CD4-positive, alpha-beta memory T cell (primary cell): ENCODE measurements at regions of chr17 and their contacts with region 1.

Region 1: DNA sequence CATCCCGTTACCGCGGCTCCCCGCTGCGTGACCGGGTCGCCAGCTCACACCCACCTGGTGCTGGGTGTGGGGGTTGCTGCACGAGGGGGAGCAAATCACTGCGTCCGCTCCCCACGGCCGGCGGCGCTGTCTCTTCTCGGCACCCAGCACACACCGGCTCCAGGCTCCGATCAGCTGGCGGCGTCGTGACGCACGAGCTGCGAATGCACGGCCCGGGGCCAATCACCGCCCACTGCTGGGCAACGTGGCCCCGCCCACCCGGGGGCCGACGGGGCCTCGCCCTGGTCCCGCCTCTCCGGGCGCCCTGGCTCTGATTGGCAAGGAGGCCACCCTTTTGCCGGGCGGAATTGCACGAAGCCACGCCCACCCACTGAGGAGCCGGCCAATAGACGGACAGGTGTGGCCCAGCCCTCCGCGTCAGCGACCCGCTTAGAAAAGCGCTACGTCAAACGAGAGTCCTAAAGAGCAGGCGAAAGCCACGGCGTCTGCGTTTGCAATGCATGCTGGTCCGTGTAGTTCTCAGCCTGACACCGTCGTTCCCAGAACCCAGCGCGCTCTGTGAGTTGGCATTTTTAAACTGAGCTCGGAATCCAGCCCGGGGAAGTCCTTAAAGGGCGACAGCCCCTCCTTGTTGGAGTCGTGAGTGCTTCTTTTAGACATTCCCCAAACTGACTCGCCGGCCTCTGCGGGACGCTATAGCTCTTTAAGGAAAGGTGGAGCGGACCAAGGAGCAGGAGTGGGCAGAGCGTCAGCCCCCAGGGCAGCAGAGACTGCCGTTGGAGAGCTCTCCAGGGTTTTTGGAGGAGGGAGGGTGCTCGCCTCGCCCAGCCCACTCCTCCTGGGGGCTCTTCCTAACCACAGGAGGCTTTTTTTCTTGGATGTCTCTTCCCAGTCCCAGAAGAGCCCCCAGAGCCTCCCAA is 6.2 kb upstream of the TLCD2 start:
- DNase-seq: peak; percentile 100
- H3K4me3 ChIP-seq: peak overlapping the region; percentile 76 to 100
- H3K4me3 Mint-ChIP-seq: peak overlapping the region; percentile 90 to 96 (median 94)
- H3K27ac ChIP-seq: peak overlapping the region; percentile 89
- H3K27ac Mint-ChIP-seq: peak overlapping the region; percentile 89 to 98 (median 96)
- H3K4me1 ChIP-seq: peaks cover 31% of the 10 kb centered on the region
- H3K4me1 Mint-ChIP-seq: peaks cover 14 to 55% (median 35%) of the 10 kb centered on the region in 4 donors
- H3K27me3 ChIP-seq: no peaks in the 10 kb centered on the region
- H3K27me3 Mint-ChIP-seq: no peaks in the 10 kb centered on the region

Region 2: DNA sequence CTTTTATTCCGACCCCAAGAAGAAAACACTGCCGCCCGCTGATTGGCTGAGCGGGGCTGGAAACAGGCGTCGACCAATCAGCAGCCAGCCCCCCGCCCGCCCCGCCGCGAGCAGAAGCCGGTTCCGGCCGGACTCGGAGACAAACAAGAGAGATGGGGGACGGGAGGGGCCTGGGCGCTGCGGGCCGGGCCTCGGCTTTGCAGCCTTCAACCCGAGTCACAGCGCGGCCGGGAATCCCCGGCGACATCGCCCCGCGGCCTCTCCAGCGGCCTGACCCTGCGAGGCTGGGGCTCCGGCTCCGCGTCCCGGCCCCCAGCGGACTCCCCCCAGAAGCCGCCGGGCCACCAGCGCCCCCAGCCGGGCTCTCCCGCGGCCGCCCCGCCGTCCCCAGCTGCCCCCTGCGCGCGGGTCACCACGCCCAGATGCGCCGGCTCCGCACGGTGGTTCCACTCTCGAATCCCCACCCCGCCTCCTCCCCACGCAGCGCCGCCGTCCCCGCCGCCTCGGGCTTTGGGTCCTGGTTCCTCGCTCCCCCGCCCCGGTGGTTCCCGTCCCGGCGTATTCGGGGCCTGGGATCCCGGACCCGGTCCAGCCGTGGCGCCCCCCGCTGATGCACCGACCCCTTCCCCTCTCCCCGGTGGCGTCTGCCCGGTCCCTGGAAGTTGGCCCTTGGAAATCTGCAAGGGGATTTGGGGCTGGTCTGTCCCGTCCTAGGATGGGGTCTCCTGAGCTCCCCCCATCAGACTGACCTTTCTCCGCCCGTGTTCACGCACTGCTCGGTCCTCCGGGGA is 87.3 kb before region 1 on chr17:
- CTCF ChIA-PET with region 1: interaction called, 3 read pairs
- POLR2A ChIA-PET with region 1: interaction called, 3 read pairs
- intact Hi-C with region 1: loop called (anchors 1 kb)
- DNase-seq: peak; percentile 83 to 90 (median 85)
- H3K4me3 ChIP-seq: peak overlapping the region; percentile 57 to 73
- H3K4me3 Mint-ChIP-seq: peak overlapping the region; percentile 87 to 99 (median 92)
- H3K27ac ChIP-seq: peak overlapping the region; percentile 44
- H3K27ac Mint-ChIP-seq: peak overlapping the region; percentile 75 to 96 (median 86)
- H3K4me1 ChIP-seq: peaks cover 22% of the 10 kb centered on the region
- H3K4me1 Mint-ChIP-seq: peaks cover 3 to 27% (median 12%) of the 10 kb centered on the region in 4 donors
- H3K27me3 ChIP-seq: peaks cover 8% of the 10 kb centered on the region
- H3K27me3 Mint-ChIP-seq: peaks cover 1% of the 10 kb centered on the region in 2 donors

Region 3: GRCh38 chr17:1673041-1673785 is 43.1 kb before region 1 on chr17:
- CTCF ChIA-PET with region 1: interaction called, 18 read pairs
- POLR2A ChIA-PET with region 1: interaction called, 17 read pairs
- intact Hi-C with region 1: loop called (anchors 5 kb)
- DNase-seq: peak; percentile 21 to 71 (median 42)
- H3K4me3 ChIP-seq: no peak overlapping the region
- H3K4me3 Mint-ChIP-seq: peak overlapping the region in 2 of 8 donors; percentile 13 to 21
- H3K27ac ChIP-seq: peak overlapping the region; percentile 4
- H3K27ac Mint-ChIP-seq: peak overlapping the region in 6 of 7 donors; percentile 37 to 74 (median 62)
- H3K4me1 ChIP-seq: no peaks in the 10 kb centered on the region
- H3K4me1 Mint-ChIP-seq: peaks cover 18 to 37% (median 29%) of the 10 kb centered on the region in 4 donors
- H3K27me3 ChIP-seq: no peaks in the 10 kb centered on the region
- H3K27me3 Mint-ChIP-seq: no peaks in the 10 kb centered on the region

Region 4: GRCh38 chr17:1764284-1764683 is 47.9 kb after region 1 on chr17:
- CTCF ChIA-PET with region 1: interaction called, 21 read pairs
- POLR2A ChIA-PET with region 1: interaction called, 62 read pairs
- intact Hi-C with region 1: loop called (anchors 5 kb)
- DNase-seq: peak; percentile 43 to 83 (median 76)
- H3K4me3 ChIP-seq: no peak overlapping the region
- H3K4me3 Mint-ChIP-seq: peak overlapping the region; percentile 40 to 86 (median 66)
- H3K27ac ChIP-seq: peak overlapping the region; percentile 43
- H3K27ac Mint-ChIP-seq: peak overlapping the region; percentile 51 to 97 (median 92)
- H3K4me1 ChIP-seq: peaks cover 34% of the 10 kb centered on the region
- H3K4me1 Mint-ChIP-seq: peaks cover 17 to 49% (median 22%) of the 10 kb centered on the region in 4 donors
- H3K27me3 ChIP-seq: no peaks in the 10 kb centered on the region
- H3K27me3 Mint-ChIP-seq: no peaks in the 10 kb centered on the region

Region 5: DNA sequence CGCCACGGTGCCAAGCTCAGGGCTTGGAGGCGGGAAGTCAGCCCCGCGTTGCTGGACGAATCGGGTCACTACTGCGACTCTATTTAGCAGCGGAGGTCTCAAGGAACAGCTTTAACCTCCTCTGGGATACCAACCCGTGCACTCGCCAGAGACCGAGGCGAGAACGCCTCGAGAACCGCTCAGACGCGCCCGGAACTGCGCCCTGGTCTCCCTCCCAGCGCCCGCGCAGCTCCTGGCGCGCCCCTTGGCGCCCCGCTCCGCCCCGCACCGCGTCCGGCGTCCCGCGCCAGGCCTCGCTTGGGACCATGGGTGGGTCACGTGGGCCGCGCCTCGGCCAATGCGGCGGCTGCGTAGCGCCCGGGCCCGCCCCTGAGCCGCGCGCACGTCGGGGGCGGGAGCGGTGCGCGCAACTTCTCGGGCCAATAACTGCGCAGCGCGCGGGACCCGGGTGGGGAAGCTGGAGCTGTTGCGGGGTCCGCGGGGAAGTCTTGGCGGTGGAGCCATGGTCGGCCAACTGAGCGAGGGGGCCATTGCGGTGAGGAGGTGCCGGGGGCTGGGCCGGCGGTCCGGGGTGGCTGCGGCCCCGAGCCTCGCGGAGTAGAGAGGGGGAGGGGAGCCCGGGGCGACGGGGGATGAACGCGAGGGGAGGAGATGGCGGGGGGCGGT is 113.4 kb after region 1 on chr17 and contains the starts of genes RPA1 and SMYD4:
- CTCF ChIA-PET with region 1: interaction called, 6 read pairs
- POLR2A ChIA-PET with region 1: interaction called, 29 read pairs
- intact Hi-C with region 1: loop called (anchors 2 kb)
- DNase-seq: peak; percentile 87 to 91 (median 88)
- H3K4me3 ChIP-seq: peak within 1 kb of the TSS; percentile 58 to 73
- H3K4me3 Mint-ChIP-seq: peak within 1 kb of the TSS; percentile 92 to 99 (median 97)
- H3K27ac ChIP-seq: peak within 1 kb of the TSS; percentile 67
- H3K27ac Mint-ChIP-seq: peak within 1 kb of the TSS; percentile 89 to 99 (median 97)
- H3K4me1 ChIP-seq: peaks cover 59% of the 10 kb centered on the region
- H3K4me1 Mint-ChIP-seq: peaks cover 33 to 70% (median 52%) of the 10 kb centered on the region in 4 donors
- H3K27me3 ChIP-seq: no peaks in the 10 kb centered on the region
- H3K27me3 Mint-ChIP-seq: no peaks in the 10 kb centered on the region
- total RNA-seq, gene RPA1: 103 to 119 TPM
- total RNA-seq, gene SMYD4: 31.2 to 31.5 TPM

Region 6: DNA sequence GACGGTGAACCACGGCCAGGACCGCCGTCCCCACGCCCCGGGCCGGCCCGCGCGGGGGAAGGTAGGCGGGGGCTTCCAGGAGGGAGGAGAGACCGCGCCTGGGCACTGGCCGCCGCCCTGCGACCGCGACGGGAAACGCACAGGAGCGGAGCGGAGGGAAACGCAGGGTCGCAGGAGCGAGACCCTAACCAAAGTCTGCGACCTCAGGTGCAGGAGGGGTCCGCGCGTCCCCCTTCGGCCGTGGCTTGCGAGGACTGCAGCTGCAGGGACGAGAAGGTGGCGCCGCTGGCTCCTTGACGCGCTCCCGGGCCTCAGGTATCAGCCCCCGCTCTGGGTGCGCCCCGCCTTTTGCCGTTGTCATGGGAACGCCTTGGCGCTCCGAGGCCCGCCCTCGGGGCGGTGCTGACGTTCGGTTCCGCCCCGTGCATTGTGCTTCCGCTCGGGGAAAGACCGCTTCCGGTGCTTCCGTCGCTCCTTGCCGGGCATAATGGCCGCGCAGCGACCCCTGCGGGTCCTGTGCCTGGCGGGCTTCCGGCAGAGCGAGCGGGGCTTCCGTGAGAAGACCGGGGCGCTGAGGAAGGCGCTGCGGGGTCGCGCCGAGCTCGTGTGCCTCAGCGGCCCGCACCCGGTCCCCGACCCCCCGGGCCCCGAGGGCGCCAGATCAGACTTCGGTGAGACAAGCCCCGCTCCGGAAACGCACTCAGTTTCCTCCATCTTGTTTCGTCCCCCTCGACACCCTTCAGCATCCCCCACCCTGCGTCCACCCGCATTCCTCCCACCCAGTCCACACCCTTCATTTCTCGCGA is 325.4 kb after region 1 on chr17 and contains the start of gene OVCA2:
- CTCF ChIA-PET with region 1: interaction called, 3 read pairs
- POLR2A ChIA-PET with region 1: interaction called, 13 read pairs
- intact Hi-C with region 1: no loop called
- DNase-seq: peak; percentile 96 to 98 (median 97)
- H3K4me3 ChIP-seq: peak within 1 kb of the TSS; percentile 64 to 79
- H3K4me3 Mint-ChIP-seq: peak within 1 kb of the TSS; percentile 90 to 94 (median 92)
- H3K27ac ChIP-seq: peak within 1 kb of the TSS; percentile 85
- H3K27ac Mint-ChIP-seq: peak within 1 kb of the TSS; percentile 89 to 98 (median 96)
- H3K4me1 ChIP-seq: peaks cover 24% of the 10 kb centered on the region
- H3K4me1 Mint-ChIP-seq: peaks cover 6 to 32% (median 14%) of the 10 kb centered on the region in 4 donors
- H3K27me3 ChIP-seq: no peaks in the 10 kb centered on the region
- H3K27me3 Mint-ChIP-seq: no peaks in the 10 kb centered on the region
- total RNA-seq, gene OVCA2: 27.9 to 36.7 TPM

Region 7: DNA sequence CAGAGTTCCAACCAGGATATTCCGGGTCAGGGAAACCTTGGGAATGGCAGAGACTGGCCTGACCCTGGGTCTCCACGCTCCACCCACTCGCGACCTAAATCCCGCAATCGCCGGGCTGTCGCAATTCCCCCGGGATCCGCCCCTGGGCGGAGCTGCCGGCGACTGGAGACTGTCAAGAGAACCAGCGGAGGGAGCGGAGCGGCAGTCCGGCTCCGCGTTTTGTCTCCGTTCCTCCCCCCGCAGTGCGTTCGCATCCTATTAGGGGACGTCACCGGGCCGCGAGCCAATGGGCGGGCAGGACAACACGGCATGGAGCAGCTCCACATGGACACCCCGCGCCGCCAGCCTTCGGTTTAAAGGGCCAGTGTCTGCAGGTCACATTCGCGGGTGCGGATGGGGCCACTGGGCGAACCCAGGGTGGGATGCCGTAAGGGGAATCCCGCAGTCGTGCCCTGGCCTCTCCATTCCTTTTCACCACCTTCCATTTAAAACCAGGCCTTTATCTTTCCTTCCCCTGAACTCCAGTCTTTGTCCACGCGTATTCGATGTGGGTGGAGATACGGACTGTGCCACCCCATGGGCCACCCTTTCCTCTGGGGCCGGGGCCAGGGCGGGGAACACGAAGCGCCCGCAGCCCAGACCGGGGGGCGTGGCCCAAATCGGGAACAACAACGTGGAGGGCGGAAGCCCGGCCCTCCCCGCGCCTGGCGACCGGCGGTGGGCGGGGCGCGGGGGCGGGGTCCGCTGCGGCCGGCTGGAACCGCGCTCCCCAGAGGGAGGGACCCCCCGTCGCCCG is 685.3 kb after region 1 on chr17:
- CTCF ChIA-PET with region 1: no interaction called
- POLR2A ChIA-PET with region 1: interaction called, 3 read pairs
- intact Hi-C with region 1: loop called (anchors 1 kb)
- DNase-seq: peak; percentile 99 to 100 (median 100)
- H3K4me3 ChIP-seq: peak overlapping the region; percentile 65 to 89
- H3K4me3 Mint-ChIP-seq: peak overlapping the region; percentile 90 to 100 (median 98)
- H3K27ac ChIP-seq: peak overlapping the region; percentile 95
- H3K27ac Mint-ChIP-seq: peak overlapping the region; percentile 99 to 100 (median 100)
- H3K4me1 ChIP-seq: peaks cover 35% of the 10 kb centered on the region
- H3K4me1 Mint-ChIP-seq: peaks cover 18 to 54% (median 33%) of the 10 kb centered on the region in 4 donors
- H3K27me3 ChIP-seq: no peaks in the 10 kb centered on the region
- H3K27me3 Mint-ChIP-seq: peaks cover 0 to 8% of the 10 kb centered on the region in 2 donors